CD4-positive, alpha-beta memory T cell (primary cell): ENCODE measurements at regions of chr9 and their contacts with region 1.

Region 1: DNA sequence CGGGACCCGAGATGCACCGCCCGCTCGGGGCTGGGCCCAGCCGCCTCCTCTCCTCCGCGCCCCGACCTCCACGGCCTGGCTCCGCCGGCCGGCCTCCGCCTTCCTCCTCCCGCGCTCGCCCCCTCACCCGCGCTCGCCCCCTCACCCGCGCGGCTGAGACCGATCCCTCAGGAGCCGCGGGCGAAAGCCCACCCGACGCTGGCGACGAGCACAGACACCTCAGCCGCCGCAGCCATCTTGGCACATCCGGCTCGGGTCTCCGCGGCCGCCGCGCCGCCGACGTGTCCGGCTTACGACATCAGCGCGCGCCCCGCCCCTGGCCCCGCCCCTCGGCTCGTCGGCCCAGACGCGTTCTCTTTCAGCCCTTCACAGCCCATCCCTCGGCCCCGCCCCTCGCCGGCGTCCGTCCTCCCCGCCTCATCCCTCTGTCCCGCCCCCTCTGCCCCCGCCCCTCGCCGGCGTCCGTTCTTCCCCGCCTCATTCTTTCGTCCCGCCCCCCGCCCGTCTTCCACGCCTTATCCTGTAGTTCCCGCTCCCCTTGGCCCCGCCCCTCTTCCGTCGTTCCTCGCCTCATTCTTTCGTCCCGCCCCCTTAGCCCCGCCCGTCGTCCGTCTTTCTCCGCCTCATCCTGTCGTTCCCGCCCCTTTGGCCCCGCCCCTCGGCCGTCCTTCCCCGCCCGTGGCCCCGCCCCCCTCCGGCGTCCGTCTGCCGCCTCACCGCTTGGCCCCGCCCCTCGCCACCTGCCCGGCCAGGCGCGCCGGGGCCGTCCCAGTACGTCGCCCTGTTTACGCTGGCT is at the start of gene SEC16A:
- DNase-seq: peak; percentile 98 to 99 (median 98)
- H3K4me3 ChIP-seq: peak within 1 kb of the TSS; percentile 85 to 87
- H3K4me3 Mint-ChIP-seq: peak within 1 kb of the TSS; percentile 89 to 99 (median 96)
- H3K27ac ChIP-seq: peak within 1 kb of the TSS; percentile 99
- H3K27ac Mint-ChIP-seq: peak within 1 kb of the TSS; percentile 97 to 100 (median 99)
- H3K4me1 ChIP-seq: peaks cover 42% of the 10 kb centered on the region
- H3K4me1 Mint-ChIP-seq: peaks cover 20 to 52% (median 33%) of the 10 kb centered on the region in 4 donors
- H3K27me3 ChIP-seq: no peaks in the 10 kb centered on the region
- H3K27me3 Mint-ChIP-seq: no peaks in the 10 kb centered on the region
- total RNA-seq, gene SEC16A: 82.9 to 87.7 TPM

Region 2: GRCh38 chr9:135907431-135908092 is 575.4 kb before region 1 on chr9 and contains the start of gene CAMSAP1:
- CTCF ChIA-PET with region 1: no interaction called
- POLR2A ChIA-PET with region 1: no interaction called
- intact Hi-C with region 1: loop called (anchors 2 kb)
- DNase-seq: peak; percentile 92 to 95 (median 93)
- H3K4me3 ChIP-seq: peak within 1 kb of the TSS; percentile 33 to 69
- H3K4me3 Mint-ChIP-seq: peak within 1 kb of the TSS; percentile 86 to 94 (median 91)
- H3K27ac ChIP-seq: peak within 1 kb of the TSS; percentile 66
- H3K27ac Mint-ChIP-seq: peak within 1 kb of the TSS; percentile 67 to 95 (median 91)
- H3K4me1 ChIP-seq: peaks cover 44% of the 10 kb centered on the region
- H3K4me1 Mint-ChIP-seq: peaks cover 37 to 67% (median 53%) of the 10 kb centered on the region in 4 donors
- H3K27me3 ChIP-seq: no peaks in the 10 kb centered on the region
- H3K27me3 Mint-ChIP-seq: no peaks in the 10 kb centered on the region
- total RNA-seq, gene CAMSAP1: 40.6 to 51.7 TPM

Region 3: GRCh38 chr9:136327313-136327974 is 155.5 kb before region 1 on chr9 and contains the start of gene GPSM1:
- CTCF ChIA-PET with region 1: no interaction called
- POLR2A ChIA-PET with region 1: no interaction called
- intact Hi-C with region 1: no loop called
- DNase-seq: peak; percentile 25 to 51 (median 49)
- H3K4me3 ChIP-seq: peak within 1 kb of the TSS in 1 of 2 donors; percentile 24
- H3K4me3 Mint-ChIP-seq: peak within 1 kb of the TSS; percentile 54 to 83 (median 70)
- H3K27ac ChIP-seq: no peak within 1 kb of the TSS
- H3K27ac Mint-ChIP-seq: peak within 1 kb of the TSS in 1 of 7 donors; percentile 71
- H3K4me1 ChIP-seq: peaks cover 16% of the 10 kb centered on the region
- H3K4me1 Mint-ChIP-seq: peaks cover 0 to 8% (median 4%) of the 10 kb centered on the region in 4 donors
- H3K27me3 ChIP-seq: no peaks in the 10 kb centered on the region
- H3K27me3 Mint-ChIP-seq: no peaks in the 10 kb centered on the region
- total RNA-seq, gene GPSM1: 7.6 to 8.1 TPM

Region 4: GRCh38 chr9:136354592-136355085 is 128.4 kb before region 1 on chr9:
- CTCF ChIA-PET with region 1: no interaction called
- POLR2A ChIA-PET with region 1: no interaction called
- intact Hi-C with region 1: no loop called
- DNase-seq: no peak
- H3K4me3 ChIP-seq: no peak overlapping the region
- H3K4me3 Mint-ChIP-seq: no peak overlapping the region
- H3K27ac ChIP-seq: no peak overlapping the region
- H3K27ac Mint-ChIP-seq: peak overlapping the region in 1 of 7 donors; percentile 42
- H3K4me1 ChIP-seq: no peaks in the 10 kb centered on the region
- H3K4me1 Mint-ChIP-seq: peaks cover 0 to 4% (median 0%) of the 10 kb centered on the region in 4 donors
- H3K27me3 ChIP-seq: no peaks in the 10 kb centered on the region
- H3K27me3 Mint-ChIP-seq: no peaks in the 10 kb centered on the region

Region 5: DNA sequence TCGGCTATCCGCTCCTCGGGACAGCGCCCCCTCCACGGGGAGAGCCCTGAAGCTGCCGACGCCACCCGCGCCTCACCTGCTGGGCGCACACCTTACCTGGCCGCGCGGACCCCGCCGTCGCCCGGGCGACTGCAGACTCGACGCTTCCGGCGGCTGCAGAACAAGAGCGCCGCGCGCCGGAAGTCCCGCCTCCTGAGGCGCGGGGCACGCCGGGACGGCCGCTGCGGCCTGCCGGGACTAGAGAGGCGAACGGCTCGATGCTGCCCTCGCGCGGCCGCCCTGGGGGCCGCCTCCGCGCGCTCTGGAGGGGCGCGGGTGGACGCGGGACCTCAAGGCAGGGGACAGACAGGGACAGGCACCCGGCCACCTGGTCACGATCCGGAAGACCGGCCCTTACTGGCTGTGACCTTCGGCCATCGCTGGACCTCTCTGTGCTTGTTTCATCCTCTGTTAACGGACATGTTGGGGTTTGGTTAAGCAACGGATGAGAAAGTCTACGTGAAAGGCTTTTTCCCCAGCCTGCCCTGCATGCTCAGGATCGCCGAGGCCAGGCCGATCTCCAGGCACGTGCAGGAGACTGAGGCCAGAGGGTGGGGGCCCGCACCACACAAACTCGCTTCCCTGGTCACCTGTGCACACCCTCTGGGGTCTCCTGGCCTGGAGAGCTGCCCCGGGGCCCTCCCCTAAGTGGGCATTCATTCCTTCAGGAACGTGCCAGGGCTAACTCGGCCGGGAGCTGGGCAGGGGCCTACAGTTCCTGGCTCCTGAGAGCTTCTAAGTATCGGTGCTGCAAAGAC is 82.8 kb before region 1 on chr9 and contains the start of gene SNAPC4:
- CTCF ChIA-PET with region 1: interaction called, 10 read pairs
- POLR2A ChIA-PET with region 1: no interaction called
- intact Hi-C with region 1: loop called (anchors 2 kb)
- DNase-seq: peak; percentile 80 to 87 (median 85)
- H3K4me3 ChIP-seq: peak within 1 kb of the TSS; percentile 36 to 57
- H3K4me3 Mint-ChIP-seq: peak within 1 kb of the TSS; percentile 83 to 90 (median 88)
- H3K27ac ChIP-seq: peak within 1 kb of the TSS; percentile 55
- H3K27ac Mint-ChIP-seq: peak within 1 kb of the TSS; percentile 30 to 93 (median 79)
- H3K4me1 ChIP-seq: peaks cover 51% of the 10 kb centered on the region
- H3K4me1 Mint-ChIP-seq: peaks cover 28 to 50% (median 40%) of the 10 kb centered on the region in 4 donors
- H3K27me3 ChIP-seq: no peaks in the 10 kb centered on the region
- H3K27me3 Mint-ChIP-seq: no peaks in the 10 kb centered on the region
- total RNA-seq, gene SNAPC4: 13.1 to 15.4 TPM

Region 6: GRCh38 chr9:136533775-136534157 is 50.8 kb after region 1 on chr9:
- CTCF ChIA-PET with region 1: interaction called, 58 read pairs
- POLR2A ChIA-PET with region 1: interaction called, 26 read pairs
- intact Hi-C with region 1: no loop called
- DNase-seq: peak; percentile 48 to 85 (median 58)
- H3K4me3 ChIP-seq: peak overlapping the region; percentile 8 to 54
- H3K4me3 Mint-ChIP-seq: peak overlapping the region; percentile 74 to 90 (median 78)
- H3K27ac ChIP-seq: peak overlapping the region; percentile 66
- H3K27ac Mint-ChIP-seq: peak overlapping the region; percentile 81 to 93 (median 90)
- H3K4me1 ChIP-seq: peaks cover 93% of the 10 kb centered on the region
- H3K4me1 Mint-ChIP-seq: peaks cover 20 to 64% (median 41%) of the 10 kb centered on the region in 4 donors
- H3K27me3 ChIP-seq: no peaks in the 10 kb centered on the region
- H3K27me3 Mint-ChIP-seq: no peaks in the 10 kb centered on the region

Region 7: DNA sequence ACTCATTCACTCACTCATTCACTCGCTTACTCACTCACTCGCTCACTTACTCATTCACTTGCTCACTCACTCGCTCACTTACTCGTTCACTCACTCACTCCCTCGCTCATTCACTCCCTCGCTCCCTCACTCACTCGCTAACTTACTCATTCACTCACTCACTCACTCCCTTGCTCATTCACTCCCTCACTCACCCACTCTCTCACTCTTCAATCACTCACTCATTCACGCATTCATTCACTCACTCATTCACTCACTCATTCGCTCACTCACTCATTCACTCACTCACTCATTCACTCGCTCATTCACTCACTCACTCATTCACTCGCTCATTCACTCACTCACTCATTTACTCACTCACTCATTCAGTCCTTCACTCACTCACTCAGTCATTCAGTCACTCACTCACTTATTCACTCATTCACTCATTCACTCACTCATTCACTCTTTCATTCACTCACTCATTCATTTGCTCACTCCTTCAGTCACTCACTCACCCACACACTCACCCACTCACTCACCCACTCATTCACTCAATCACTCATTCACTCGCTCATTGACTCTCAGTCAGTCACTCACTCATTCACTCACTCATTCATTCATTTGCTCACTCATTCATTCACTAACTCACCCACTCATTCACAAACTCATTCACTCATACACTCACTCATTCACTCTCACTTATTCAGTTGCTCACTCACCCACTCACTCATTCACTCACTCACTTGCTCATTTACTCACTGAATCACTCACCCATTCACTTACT is 98.8 kb after region 1 on chr9:
- CTCF ChIA-PET with region 1: no interaction called
- POLR2A ChIA-PET with region 1: no interaction called
- intact Hi-C with region 1: no loop called
- DNase-seq: no peak
- H3K4me3 ChIP-seq: no peak overlapping the region
- H3K4me3 Mint-ChIP-seq: no peak overlapping the region
- H3K27ac ChIP-seq: no peak overlapping the region
- H3K27ac Mint-ChIP-seq: no peak overlapping the region
- H3K4me1 ChIP-seq: no peaks in the 10 kb centered on the region
- H3K4me1 Mint-ChIP-seq: peaks cover 5 to 7% (median 7%) of the 10 kb centered on the region in 4 donors
- H3K27me3 ChIP-seq: no peaks in the 10 kb centered on the region
- H3K27me3 Mint-ChIP-seq: no peaks in the 10 kb centered on the region

Region 8: DNA sequence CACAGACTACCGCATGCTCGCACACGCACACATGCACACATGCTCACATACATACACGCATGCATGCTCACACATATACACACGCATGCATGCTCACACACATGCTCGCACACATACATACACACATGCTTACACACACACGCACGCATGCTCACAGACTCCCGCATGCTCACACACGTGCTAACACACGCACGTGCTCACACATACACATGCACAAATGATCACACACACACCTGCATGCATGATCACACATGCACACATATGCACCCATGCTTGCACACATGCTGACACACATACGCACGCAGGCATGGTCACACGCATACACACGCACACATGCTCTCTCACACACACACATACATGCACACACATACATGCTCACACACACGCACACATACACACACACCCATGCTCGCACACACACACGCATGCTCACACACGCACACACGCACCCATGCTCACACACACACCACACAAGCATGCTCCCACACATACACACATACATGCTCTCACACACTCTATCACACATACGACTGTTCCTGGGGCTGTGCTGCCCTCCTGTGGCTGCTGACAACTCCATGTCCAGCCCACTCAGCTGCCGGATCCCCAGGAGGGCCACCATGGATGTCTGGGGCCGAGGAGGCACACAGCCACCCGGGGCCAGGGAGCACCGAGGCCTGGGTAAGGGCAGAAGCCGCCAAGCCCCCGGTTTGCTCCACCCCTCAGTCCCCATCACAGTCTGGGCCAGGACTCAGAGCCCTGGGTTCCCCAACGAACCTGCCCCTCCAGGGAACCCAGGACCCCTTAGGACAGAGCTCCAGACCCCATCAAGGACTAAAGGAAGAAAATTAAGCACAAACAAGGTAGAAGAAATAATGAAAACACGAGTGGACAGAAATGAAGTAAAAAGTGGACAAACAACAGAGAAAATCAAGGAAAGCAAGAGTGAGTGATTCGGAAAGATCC is 148.3 kb after region 1 on chr9:
- CTCF ChIA-PET with region 1: interaction called, 120 read pairs
- POLR2A ChIA-PET with region 1: interaction called, 14 read pairs
- intact Hi-C with region 1: no loop called
- DNase-seq: peak; percentile 79 to 84 (median 81)
- H3K4me3 ChIP-seq: no peak overlapping the region
- H3K4me3 Mint-ChIP-seq: no peak overlapping the region
- H3K27ac ChIP-seq: no peak overlapping the region
- H3K27ac Mint-ChIP-seq: no peak overlapping the region
- H3K4me1 ChIP-seq: peaks cover 6% of the 10 kb centered on the region
- H3K4me1 Mint-ChIP-seq: peaks cover 0 to 3% (median 1%) of the 10 kb centered on the region in 4 donors
- H3K27me3 ChIP-seq: no peaks in the 10 kb centered on the region
- H3K27me3 Mint-ChIP-seq: peaks cover 0 to 3% of the 10 kb centered on the region in 2 donors

Region 9: DNA sequence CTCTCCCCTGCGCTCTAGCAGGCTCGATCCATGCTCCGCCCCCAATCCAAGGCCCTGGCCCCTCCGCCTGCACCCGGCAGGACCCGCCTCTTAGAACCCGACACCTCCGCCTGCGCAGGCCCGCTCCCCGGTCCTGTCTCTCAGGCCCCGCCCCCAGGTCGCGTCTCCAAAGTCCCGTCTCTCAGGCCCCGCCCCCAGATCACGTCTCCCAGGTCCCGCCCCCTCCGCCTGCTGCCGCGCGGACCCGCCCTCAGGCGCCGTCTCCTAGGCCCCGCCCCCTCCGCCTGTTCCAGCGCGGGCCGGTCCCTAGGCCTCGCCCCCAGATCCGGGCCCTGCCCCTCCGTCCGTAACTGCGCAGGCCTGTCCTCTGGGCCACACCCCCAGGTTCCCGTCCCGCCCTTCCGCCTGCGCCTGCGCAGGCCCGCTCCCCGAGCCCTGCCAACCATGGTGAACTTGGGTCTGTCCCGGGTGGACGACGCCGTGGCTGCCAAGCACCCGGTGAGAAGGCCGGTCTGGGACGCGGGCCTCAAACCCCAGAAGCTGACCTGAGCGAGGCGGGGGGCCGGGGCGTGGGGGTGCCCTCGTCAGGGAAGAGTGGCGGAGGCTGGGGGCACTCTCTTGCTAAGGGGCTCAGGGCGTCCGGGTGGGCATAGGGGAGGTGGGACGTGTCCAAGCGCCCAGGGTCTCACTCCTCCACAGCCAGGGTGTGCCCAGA is 308.1 kb after region 1 on chr9 and contains the start of gene TMEM141:
- CTCF ChIA-PET with region 1: no interaction called
- POLR2A ChIA-PET with region 1: no interaction called
- intact Hi-C with region 1: loop called (anchors 1 kb)
- DNase-seq: peak; percentile 99 to 100 (median 99)
- H3K4me3 ChIP-seq: peak within 1 kb of the TSS; percentile 61 to 86
- H3K4me3 Mint-ChIP-seq: peak within 1 kb of the TSS; percentile 81 to 88 (median 85)
- H3K27ac ChIP-seq: peak within 1 kb of the TSS; percentile 93
- H3K27ac Mint-ChIP-seq: peak within 1 kb of the TSS; percentile 91 to 98 (median 95)
- H3K4me1 ChIP-seq: peaks cover 31% of the 10 kb centered on the region
- H3K4me1 Mint-ChIP-seq: peaks cover 8 to 42% (median 24%) of the 10 kb centered on the region in 4 donors
- H3K27me3 ChIP-seq: no peaks in the 10 kb centered on the region
- H3K27me3 Mint-ChIP-seq: no peaks in the 10 kb centered on the region
- total RNA-seq, gene TMEM141: 51.1 to 53.4 TPM